GM18951 (cell line): ENCODE measurements at regions of chr12 and their contacts with region 1.

Region 1: GRCh38 chr12:17778242-17778641 is 311.8 kb downstream of the RERGL start:
- POLR2A ChIP-seq: no peak

Region 2: GRCh38 chr12:17866802-17867201 is 88.6 kb after region 1 on chr12:
- in situ Hi-C with region 1: loop called (anchors 10 kb)
- POLR2A ChIP-seq: no peak